ENCODE measurements at regions of chr11 and their contacts with region 1.

Region 1: DNA sequence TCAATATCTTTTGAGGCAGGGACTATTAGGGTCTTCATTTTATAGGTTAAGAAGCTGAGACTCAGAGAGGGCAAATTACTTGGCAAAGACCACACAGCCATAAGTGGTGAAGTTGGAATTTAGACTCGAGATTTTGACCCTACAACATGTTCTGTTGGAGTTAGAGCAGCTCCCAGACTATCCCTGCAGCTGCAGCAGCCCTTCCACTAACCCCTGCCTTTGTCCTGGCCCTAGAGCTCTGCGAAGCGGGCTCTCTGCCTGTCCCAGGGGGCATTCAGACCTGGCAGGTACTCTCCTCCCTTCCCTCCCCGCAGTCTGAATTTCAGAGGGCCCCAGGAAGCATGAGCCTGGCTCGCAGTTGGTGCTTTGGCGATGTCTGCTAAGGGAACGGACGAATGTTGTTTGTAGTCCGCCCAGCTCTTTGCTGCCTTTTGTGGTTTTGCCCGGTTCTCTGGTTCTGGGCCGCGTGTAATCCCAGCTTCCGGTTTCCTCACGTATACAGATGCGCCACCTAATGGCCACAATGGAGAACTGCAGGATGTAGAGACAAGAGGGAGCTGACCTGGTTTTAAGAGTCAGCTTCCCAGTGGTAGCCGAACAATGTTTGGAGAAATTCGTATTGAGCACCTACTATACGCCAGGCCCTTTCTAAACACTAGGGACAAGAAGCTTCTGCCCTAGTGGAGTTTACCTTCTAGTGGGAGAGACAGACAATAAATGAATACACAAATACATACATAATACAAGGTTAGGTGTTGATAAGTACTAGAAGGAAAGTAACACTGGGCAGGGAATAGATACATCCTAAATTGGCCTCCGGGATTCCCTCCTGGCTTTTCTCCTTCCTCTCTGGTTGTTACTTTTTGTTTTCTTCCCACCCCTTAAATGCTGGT is 125.2 kb downstream of the ST3GAL4 start:
- DNase-seq: peak; percentile 77
- ATAC-seq: peak; percentile 80
- H3K4me3 Mint-ChIP-seq: peak overlapping the region; percentile 34; the same call in 1 of the 2 replicates
- H3K27ac Mint-ChIP-seq: peak overlapping the region; percentile 81; the same call in 1 of the 2 replicates
- H3K4me1 Mint-ChIP-seq: peaks cover 11% of the 10 kb centered on the region
- H3K27me3 Mint-ChIP-seq: no peaks in the 10 kb centered on the region
- CTCF ChIP-seq: peak; percentile 92

Region 2: GRCh38 chr11:126310228-126310991 is 170.2 kb before region 1 on chr11:
- CTCF ChIA-PET with region 1: interaction called, 37 read pairs
- POLR2A ChIA-PET with region 1: no interaction called
- DNase-seq: peak; percentile 82
- ATAC-seq: peak; percentile 95
- H3K4me3 Mint-ChIP-seq: no peak overlapping the region
- H3K27ac Mint-ChIP-seq: no peak overlapping the region
- H3K4me1 Mint-ChIP-seq: 0 out of 2 replicates have a peak, but pooled peaks cover 4% of the 10 kb centered on the region
- H3K27me3 Mint-ChIP-seq: no peaks in the 10 kb centered on the region
- CTCF ChIP-seq: peak; percentile 56; the same call in 1 of the 2 replicates

Region 3: GRCh38 chr11:126440792-126441514 is 39.7 kb before region 1 on chr11:
- CTCF ChIA-PET with region 1: interaction called, 147 read pairs
- POLR2A ChIA-PET with region 1: interaction called, 5 read pairs
- DNase-seq: peak; percentile 95
- ATAC-seq: peak; percentile 85
- H3K4me3 Mint-ChIP-seq: peak overlapping the region; percentile 42
- H3K27ac Mint-ChIP-seq: no peak overlapping the region
- H3K4me1 Mint-ChIP-seq: peaks cover 31% of the 10 kb centered on the region
- H3K27me3 Mint-ChIP-seq: no peaks in the 10 kb centered on the region; the same call in 1 of the 2 replicates
- CTCF ChIP-seq: peak; percentile 95

Region 4: DNA sequence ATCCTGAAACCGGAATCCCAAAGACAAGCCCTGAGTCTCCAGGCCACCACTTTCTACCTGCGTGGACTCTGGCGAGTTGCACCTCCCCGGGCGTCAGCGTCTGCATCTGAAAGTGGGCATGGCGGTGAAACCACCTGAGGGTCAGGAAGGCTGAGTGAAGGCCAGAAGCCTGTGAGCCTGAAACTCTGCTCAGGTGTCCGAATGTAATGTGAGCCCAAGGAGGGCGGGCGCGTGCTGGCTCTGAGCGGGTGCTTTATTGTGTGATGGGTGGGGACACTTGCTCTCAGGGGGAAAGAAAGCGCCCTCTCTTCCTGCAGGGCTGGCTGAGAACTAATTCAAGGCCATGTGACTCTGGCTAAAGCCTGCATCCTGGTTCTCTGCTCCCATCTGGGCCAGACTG is 10.4 kb after region 1 on chr11:
- CTCF ChIA-PET with region 1: interaction called, 46 read pairs
- POLR2A ChIA-PET with region 1: no interaction called
- DNase-seq: peak; percentile 50
- ATAC-seq: peak; percentile 76
- H3K4me3 Mint-ChIP-seq: no peak overlapping the region
- H3K27ac Mint-ChIP-seq: no peak overlapping the region; the same call in 1 of the 2 replicates
- H3K4me1 Mint-ChIP-seq: peaks cover 37% of the 10 kb centered on the region
- H3K27me3 Mint-ChIP-seq: no peaks in the 10 kb centered on the region; the same call in 1 of the 2 replicates
- CTCF ChIP-seq: no peak

Region 5: GRCh38 chr11:126534141-126534805 is 53.6 kb after region 1 on chr11:
- CTCF ChIA-PET with region 1: interaction called, 16 read pairs
- POLR2A ChIA-PET with region 1: no interaction called
- DNase-seq: no peak
- ATAC-seq: peak; percentile 39; the same call in 1 of the 2 replicates
- H3K4me3 Mint-ChIP-seq: no peak overlapping the region
- H3K27ac Mint-ChIP-seq: no peak overlapping the region
- H3K4me1 Mint-ChIP-seq: no peaks in the 10 kb centered on the region
- H3K27me3 Mint-ChIP-seq: no peaks in the 10 kb centered on the region; the same call in 1 of the 2 replicates
- CTCF ChIP-seq: no peak

Region 6: GRCh38 chr11:126585781-126586491 is 105.3 kb after region 1 on chr11:
- CTCF ChIA-PET with region 1: interaction called, 17 read pairs
- POLR2A ChIA-PET with region 1: interaction called, 3 read pairs
- DNase-seq: peak; percentile 53
- ATAC-seq: peak; percentile 82
- H3K4me3 Mint-ChIP-seq: no peak overlapping the region
- H3K27ac Mint-ChIP-seq: no peak overlapping the region
- H3K4me1 Mint-ChIP-seq: peaks cover 13% of the 10 kb centered on the region
- H3K27me3 Mint-ChIP-seq: no peaks in the 10 kb centered on the region; the same call in 1 of the 2 replicates
- CTCF ChIP-seq: no peak